ENCODE measurements at regions of chr11 and their contacts with region 1.

Region 1: DNA sequence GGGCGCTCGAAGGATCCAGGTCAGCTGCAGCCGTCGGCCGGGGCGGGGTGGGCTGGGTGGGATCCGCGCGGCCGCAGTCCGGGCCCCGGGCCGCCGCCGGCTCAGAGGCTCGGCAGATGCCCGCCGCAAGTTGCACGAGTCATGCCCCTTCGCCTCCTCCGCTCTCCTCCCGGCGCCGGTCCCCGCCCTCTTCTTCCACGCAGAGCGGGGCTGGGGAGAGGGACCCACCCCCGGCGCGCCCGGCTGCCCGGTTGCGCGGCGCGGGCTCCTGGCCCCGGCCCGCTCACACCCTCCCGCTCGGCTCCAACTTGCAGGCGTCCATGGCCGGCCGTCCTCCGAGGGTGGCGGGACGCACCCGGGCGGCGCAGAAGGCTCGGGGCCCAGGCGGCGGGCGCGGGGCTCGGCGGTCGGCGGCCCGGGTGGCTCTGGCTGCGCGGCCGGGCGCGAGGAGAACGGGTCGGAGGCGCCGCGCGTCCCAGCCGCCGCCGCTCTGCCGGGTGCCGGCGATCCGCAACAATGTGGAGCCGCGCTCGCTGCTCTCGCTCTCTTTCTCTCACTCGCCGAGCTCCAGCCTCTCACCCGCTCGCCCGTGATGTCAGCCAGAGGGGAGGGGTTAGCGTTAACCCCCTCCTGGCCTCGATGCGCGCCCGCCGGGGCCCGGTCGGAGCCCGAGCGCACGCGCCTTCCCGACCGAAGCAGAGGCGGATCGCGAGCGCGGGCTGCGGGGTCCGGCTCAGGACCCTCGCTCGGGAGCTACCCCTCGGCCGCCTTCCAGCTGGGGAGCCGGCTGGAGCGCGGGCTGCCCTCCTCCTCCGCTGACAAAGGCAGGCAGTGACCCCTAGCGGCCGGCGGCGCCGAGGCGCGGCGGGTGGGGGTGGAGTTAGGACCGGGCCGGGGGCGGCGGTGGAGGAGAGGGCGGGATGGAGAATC is at the start of gene NECTIN1:
- DNase-seq: no peak
- H3K4me3 ChIP-seq: peak within 1 kb of the TSS; percentile 58
- H3K27me3 ChIP-seq: no peaks in the 10 kb centered on the region
- CTCF ChIP-seq: peak; percentile 82
- polyA plus RNA-seq, gene NECTIN1: 1.7 and 3.0 TPM in 2 replicates

Region 2: DNA sequence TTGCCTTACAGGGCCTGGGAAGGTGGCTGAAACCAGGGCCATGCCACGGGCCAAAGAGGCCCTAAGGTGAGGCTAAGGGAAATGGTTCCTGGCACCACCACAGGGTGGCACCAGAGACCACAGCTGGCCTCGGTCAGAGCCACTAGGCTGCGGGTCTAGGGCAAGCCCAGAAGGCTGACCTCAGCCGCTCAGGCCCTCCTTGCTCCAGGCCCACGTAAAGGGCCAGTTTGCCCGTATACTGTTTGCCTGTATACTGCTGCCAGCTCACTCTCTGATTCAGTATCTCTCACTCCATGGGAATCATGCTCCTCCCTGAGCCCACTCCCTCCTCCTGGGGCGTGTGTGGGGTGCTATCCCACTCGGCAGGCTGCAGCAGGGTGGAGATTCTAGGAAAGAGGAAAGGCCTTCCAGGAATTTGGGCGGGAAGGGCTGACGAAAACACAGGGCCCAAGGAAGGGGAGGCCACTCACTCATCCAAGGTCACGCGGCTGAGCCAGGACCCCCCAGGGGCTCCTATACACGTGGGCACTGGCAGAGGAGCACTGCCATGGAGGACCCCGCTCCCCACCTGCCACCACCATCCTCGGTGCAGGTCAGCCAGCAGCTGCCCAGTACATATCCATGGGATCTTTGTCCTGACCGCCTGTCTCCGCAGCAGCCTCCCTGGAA is 62.3 kb before region 1 on chr11:
- CTCF ChIA-PET with region 1: interaction called, 17 read pairs
- POLR2A ChIA-PET with region 1: no interaction called
- DNase-seq: no peak
- H3K4me3 ChIP-seq: no peak overlapping the region
- H3K27me3 ChIP-seq: no peaks in the 10 kb centered on the region
- CTCF ChIP-seq: peak; percentile 95

Region 3: GRCh38 chr11:119681361-119681910 is 47.5 kb before region 1 on chr11:
- CTCF ChIA-PET with region 1: interaction called, 15 read pairs
- POLR2A ChIA-PET with region 1: no interaction called
- DNase-seq: no peak
- H3K4me3 ChIP-seq: no peak overlapping the region
- H3K27me3 ChIP-seq: no peaks in the 10 kb centered on the region
- CTCF ChIP-seq: peak; percentile 11; the same call in 1 of the 2 replicates

Region 4: DNA sequence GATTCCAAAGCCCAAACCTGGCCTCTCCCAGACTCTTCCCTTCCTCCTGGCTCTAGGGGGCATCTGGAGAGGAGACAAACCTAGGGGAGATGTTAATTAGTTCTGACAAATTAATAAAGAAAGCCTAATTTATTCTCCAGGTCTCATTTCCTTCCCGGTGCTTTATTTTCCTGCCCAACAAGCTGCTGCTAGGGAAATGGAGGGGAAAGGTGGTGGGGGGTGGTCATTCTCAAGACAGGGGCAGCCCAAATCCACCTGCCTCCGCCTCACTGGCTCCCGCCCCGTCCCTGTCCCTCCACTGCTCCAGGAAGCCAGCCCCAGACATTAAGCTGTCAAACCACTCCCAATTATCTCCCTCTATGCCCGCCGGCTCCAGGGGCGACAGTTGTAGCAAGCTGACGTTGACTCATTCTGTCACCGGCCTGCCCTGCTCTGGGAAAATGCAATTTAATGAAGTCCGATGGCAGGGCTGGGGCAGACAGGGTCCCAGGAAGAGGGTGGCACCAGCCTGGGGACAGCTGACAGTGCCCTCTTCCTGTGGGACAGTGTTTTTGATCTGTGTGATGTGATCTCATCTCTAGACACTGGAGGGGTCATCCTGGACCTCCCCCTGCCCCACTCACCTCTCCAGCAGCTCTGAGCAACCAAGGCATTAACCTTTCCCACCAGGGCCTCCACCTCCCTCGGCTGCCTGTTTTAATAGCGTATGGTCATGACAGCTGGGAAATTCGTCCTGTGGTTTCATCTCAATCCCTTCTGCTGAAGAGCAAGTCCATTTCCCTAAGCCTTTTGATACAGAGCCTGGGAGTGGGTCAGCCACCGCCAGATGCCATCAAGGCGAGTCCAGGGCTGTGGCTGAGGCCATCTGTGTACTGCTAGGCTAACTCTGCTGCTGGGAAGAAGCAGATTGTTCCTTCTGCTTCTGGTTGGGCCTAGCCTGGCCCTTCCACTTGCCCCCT is 27.0 kb before region 1 on chr11:
- CTCF ChIA-PET with region 1: interaction called, 25 read pairs
- POLR2A ChIA-PET with region 1: no interaction called
- DNase-seq: no peak
- H3K4me3 ChIP-seq: no peak overlapping the region
- H3K27me3 ChIP-seq: no peaks in the 10 kb centered on the region
- CTCF ChIP-seq: no peak

Region 5: GRCh38 chr11:120108154-120108865 is 379.4 kb after region 1 on chr11:
- CTCF ChIA-PET with region 1: interaction called, 17 read pairs
- POLR2A ChIA-PET with region 1: no interaction called
- DNase-seq: no peak
- H3K4me3 ChIP-seq: no peak overlapping the region
- H3K27me3 ChIP-seq: peaks cover 26% of the 10 kb centered on the region
- CTCF ChIP-seq: peak; percentile 100

Measured in BJ (cell line).